ENCODE measurements at regions of chr17 and their contacts with region 1.

Region 1: DNA sequence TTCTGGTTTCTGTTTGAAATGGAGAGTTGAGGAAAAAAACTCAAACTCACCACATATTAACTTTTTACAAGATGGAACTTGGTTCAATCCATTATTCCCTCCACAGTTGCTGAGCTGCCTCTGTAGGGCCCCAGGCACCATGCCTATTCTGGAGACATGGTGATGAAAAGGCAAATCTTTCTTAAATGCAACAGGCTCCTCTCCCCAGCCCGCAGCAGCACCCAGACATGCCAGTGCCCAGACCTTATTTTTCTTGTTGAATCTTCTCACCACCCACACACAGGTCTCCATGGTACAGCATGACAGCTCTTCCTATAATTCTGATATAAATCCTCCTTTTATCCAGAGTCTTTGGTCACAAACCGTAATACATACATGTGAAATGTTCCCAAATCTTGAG is 7.6 kb downstream of the CYTH1 start:
- DNase-seq: no peak
- ATAC-seq: peak; percentile 49
- H3K4me3 ChIP-seq: no peak overlapping the region
- H3K27ac ChIP-seq: peak overlapping the region; percentile 74
- H3K4me1 ChIP-seq: peaks cover 16% of the 10 kb centered on the region
- H3K27me3 ChIP-seq: no peaks in the 10 kb centered on the region
- CTCF ChIP-seq: no peak

Region 2: DNA sequence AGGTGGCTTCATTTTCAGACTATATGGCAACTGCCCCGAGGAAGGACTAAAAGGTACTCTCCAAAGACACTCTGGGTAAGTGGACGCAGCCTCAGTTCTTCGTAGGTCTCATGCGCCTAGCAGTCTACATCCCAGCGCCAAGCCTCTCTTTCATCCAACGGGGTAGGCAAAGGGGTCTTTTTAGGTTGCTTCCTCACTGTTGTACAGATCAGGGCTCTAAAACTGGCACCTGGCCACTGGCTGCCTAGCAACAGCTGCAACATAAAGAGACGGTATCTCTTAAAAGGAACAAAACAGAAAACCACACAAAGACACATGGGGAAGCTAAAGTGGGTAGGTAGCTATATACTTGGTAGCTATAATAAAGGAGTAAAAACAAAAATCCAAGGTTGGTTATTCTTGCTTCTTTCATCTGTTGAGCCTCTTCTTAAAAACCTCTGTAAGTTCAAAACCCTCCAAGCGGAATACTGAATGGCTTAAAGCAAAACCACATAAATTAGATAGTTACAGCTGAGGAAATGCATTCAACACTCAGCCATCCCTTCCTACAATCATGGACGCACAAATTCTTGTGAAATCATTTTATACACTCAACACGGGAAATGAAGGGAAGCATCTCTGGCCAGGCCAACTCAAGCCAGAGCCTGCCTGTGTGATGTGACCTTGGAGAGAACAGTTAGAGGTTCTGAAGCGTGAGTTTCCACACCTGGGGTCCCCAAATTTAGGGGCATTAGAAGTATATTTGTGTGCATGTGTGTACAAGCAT is 15.1 kb before region 1 on chr17:
- CTCF ChIA-PET with region 1: interaction called, 4 read pairs
- POLR2A ChIA-PET with region 1: interaction called, 11 read pairs
- in situ Hi-C with region 1: no loop called
- intact Hi-C with region 1: no loop called
- DNase-seq: no peak
- ATAC-seq: no peak
- H3K4me3 ChIP-seq: no peak overlapping the region
- H3K27ac ChIP-seq: no peak overlapping the region
- H3K4me1 ChIP-seq: peaks cover 3% of the 10 kb centered on the region; the same call in 1 of the 2 replicates
- H3K27me3 ChIP-seq: no peaks in the 10 kb centered on the region
- CTCF ChIP-seq: no peak